ENCODE measurements at regions of chr10 and their contacts with region 1.

Region 1: DNA sequence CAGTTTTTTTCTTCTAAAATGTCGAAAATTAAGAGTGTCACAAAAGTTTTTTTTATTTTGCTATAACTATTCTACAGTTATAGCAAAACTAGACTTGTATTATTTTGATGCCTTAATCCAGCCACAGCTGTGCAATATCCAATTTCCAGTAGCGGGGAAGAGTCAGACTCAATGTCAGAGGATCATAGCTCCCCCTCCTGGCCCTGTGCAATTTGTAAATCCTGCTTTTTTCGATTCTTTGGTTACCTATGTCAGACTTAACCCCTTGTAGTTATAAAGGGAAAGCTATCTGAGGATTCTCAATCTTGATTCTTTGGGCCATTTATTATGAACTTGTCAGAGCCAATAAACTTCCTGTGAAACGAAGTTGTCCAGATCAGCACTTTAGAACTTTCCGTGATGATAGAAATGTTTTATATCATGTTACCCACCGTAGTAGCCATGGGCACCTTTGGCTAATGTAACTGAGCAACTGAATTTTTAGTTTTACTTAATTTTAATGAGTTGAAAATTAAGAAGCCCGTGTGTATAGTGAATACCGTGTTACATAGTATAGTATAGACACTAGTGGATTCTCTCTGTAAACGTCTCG is 87.7 kb upstream of the PRKCQ start:
- H3K4me3 Mint-ChIP-seq: no peak overlapping the region
- H3K27ac Mint-ChIP-seq: no peak overlapping the region
- H3K4me1 Mint-ChIP-seq: no peaks in the 10 kb centered on the region
- H3K27me3 Mint-ChIP-seq: peaks cover 16% of the 10 kb centered on the region

Region 2: DNA sequence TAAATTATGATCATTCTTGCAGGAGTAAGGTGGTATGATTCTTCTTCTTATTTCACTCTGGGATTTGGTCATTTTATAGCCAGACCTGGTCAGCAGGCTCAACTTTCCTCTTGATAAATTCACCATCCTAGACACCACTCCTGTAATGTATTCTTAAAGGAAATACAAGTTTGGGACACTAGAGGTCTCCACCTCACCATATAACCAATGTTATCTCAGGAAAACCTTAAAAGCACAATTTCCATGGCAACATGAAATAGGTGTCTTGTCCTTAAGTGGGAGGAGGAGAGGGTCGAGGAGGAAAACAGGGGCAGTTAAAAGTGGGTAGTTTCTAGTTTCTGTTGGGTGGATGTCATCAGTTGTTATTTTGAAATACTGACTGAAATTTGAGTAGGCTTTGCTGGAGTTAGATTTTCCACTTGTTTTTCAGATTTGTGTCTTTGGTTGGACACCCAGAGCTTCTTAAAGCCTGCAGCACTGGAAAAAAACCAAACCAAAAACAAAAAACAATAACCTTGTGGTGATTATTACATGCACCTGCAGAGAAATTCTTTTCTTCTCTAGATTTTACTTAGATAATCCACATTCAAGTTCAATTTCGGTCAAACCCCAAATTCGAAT is 250.8 kb before region 1 on chr10:
- intact Hi-C with region 1: loop called (anchors 1 kb)
- H3K4me3 Mint-ChIP-seq: no peak overlapping the region
- H3K27ac Mint-ChIP-seq: no peak overlapping the region
- H3K4me1 Mint-ChIP-seq: no peaks in the 10 kb centered on the region
- H3K27me3 Mint-ChIP-seq: no peaks in the 10 kb centered on the region

Region 3: GRCh38 chr10:6580279-6581029 is 87.3 kb before region 1 on chr10:
- intact Hi-C with region 1: loop called (anchors 2 kb)
- H3K4me3 Mint-ChIP-seq: peak overlapping the region; percentile 78
- H3K27ac Mint-ChIP-seq: peak overlapping the region; percentile 63
- H3K4me1 Mint-ChIP-seq: peaks cover 37% of the 10 kb centered on the region
- H3K27me3 Mint-ChIP-seq: peaks cover 40% of the 10 kb centered on the region

Region 4: GRCh38 chr10:7417103-7417623 is 749.4 kb after region 1 on chr10:
- intact Hi-C with region 1: loop called (anchors 5 kb)
- H3K4me3 Mint-ChIP-seq: no peak overlapping the region
- H3K27ac Mint-ChIP-seq: no peak overlapping the region
- H3K4me1 Mint-ChIP-seq: peaks cover 6% of the 10 kb centered on the region
- H3K27me3 Mint-ChIP-seq: peaks cover 23% of the 10 kb centered on the region